ENCODE measurements at regions of chr15 and their contacts with region 1.

Region 1: GRCh38 chr15:42929306-42929848 is 8.8 kb upstream of the TTBK2 start:
- DNase-seq: no peak
- H3K4me3 ChIP-seq: no peak overlapping the region
- H3K27ac ChIP-seq: no peak overlapping the region
- H3K4me1 ChIP-seq: no peaks in the 10 kb centered on the region
- CTCF ChIP-seq: no peak

Region 2: DNA sequence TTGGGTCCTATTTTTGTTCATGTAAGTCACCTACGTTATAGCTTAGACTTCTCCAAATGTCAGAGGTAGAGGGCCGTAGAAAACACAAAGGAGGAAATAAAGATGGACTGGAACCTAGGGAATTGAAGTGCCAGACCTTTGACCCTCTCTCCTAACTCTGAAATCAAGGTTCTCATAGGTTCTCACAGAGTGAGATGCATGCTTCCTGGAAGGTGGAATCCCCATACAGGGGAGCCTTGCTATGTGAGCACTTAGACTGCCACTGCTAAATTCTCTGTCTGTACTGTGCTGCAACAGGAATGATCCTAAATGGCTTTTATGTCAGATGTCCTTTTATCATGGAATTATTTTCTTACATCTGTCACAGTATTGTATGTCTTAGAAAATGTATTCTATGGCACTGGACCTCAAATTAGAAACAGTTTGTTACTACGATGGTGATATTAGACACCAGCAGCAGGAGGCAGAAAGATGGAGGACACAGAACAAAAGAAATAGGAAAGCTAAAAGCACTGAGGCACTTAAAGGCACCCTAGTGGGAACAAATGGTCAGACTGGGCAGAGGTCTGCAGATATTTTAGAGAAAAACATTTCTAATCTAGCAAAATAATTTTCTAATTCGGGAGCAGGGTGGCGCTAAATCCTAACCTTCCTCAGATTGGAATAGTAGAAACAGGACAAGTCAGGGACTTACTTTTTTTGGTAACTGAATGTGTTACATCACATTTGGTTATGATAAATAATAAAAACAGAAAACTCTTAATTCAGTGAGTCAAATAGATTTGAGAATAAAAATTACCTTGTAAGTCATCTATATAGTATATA is 132.2 kb before region 1 on chr15:
- CTCF ChIA-PET with region 1: no interaction called
- POLR2A ChIA-PET with region 1: no interaction called
- intact Hi-C with region 1: loop called (anchors 5 kb)
- DNase-seq: no peak
- H3K4me3 ChIP-seq: no peak overlapping the region
- H3K27ac ChIP-seq: no peak overlapping the region
- H3K4me1 ChIP-seq: no peaks in the 10 kb centered on the region
- CTCF ChIP-seq: peak; percentile 36